ENCODE measurements at regions of chr4 and their contacts with region 1.

Region 1: DNA sequence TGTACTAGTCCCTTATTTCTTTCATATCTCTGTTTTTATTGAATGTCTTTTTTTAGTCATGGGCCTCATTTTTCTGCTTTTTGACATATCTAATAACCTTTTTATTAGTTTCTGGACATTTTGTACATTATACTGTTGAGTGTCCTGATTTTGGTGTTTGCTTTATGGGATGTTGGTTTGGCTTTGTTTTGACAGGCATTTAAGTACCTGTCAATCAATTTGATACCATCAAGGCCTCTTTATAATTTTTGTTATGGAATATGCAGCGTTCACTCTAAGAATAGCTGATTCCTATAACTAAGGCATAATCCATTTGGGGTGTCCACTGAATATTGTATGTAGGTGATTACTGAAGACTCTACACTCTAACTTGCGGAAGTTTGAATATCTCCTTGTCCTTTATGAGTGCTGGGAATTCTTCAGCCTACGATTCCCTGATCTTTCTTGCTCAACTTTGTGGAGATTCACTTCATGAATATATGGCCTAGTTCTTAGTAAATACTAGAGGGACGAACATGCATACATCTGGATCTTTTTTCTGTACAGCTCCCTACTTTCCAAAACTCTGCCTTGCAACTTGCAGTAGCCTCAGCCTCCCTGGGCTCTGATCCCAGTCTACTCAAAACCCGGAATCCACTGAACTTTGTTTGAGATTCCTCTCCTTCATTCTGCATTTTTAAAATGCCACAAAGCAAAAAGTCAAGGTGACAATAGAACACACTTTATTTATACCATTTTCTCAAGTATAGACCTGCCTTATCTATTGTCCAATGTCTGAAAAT is 50.2 kb upstream of the PCDH7 start:
- DNase-seq: no peak
- ATAC-seq: no peak
- H3K4me3 ChIP-seq: no peak overlapping the region
- H3K27ac ChIP-seq: no peak overlapping the region
- H3K4me1 ChIP-seq: no peaks in the 10 kb centered on the region
- H3K27me3 ChIP-seq: no peaks in the 10 kb centered on the region
- CTCF ChIP-seq: no peak
- POLR2A ChIP-seq: no peak
- RAD21 ChIP-seq: no peak

Region 2: GRCh38 chr4:29853833-29854232 is 816.2 kb before region 1 on chr4:
- CTCF ChIA-PET with region 1: no interaction called
- POLR2A ChIA-PET with region 1: no interaction called
- RAD21 ChIA-PET with region 1: no interaction called
- intact Hi-C with region 1: loop called (anchors 5 kb)
- DNase-seq: no peak
- ATAC-seq: no peak
- H3K4me3 ChIP-seq: no peak overlapping the region
- H3K27ac ChIP-seq: no peak overlapping the region
- H3K4me1 ChIP-seq: no peaks in the 10 kb centered on the region
- H3K27me3 ChIP-seq: no peaks in the 10 kb centered on the region
- CTCF ChIP-seq: no peak
- POLR2A ChIP-seq: no peak
- RAD21 ChIP-seq: no peak

Region 3: DNA sequence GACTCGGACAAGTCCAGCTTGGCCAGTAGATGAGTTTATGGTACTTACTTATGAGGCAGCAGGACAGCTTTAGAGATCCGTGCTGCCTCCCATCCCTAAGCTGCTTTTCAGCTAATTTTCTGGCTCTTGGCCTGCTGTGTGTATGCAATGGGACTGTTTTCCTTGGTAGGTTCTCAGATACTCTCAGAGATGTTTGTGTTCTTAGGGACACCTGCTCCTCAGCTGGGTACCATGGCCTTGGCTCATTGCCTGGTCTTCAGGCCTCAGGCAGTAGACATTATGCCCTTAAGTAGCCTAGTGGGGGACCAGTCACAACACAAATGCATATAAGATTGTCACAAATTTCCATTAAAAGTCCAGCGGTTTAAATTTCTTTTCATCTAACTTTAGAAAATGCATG is 738.1 kb after region 1 on chr4:
- CTCF ChIA-PET with region 1: no interaction called
- POLR2A ChIA-PET with region 1: no interaction called
- RAD21 ChIA-PET with region 1: no interaction called
- intact Hi-C with region 1: no loop called
- DNase-seq: no peak
- ATAC-seq: no peak
- H3K4me3 ChIP-seq: no peak overlapping the region
- H3K27ac ChIP-seq: no peak overlapping the region
- H3K4me1 ChIP-seq: no peaks in the 10 kb centered on the region
- H3K27me3 ChIP-seq: no peaks in the 10 kb centered on the region
- CTCF ChIP-seq: no peak
- POLR2A ChIP-seq: no peak
- RAD21 ChIP-seq: no peak

Region 4: DNA sequence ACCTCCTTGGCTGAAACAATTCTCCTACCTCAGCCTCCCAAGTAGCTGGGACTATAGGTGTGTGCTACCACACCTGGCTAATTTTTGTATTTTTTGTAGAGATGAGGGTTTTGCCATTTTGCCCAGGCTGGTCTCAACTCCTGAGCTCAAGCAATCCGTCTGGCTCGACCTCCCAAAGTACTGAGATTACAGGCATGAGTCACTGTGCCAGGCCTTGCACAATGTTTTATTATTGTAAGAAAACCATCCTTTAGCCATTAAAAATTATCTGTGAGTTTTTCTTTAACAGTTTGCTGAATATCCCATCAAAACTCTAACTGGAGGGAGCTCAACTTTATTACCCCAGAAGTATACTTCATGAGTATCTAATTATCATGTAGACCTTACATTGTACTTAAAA is 950.5 kb after region 1 on chr4:
- CTCF ChIA-PET with region 1: no interaction called
- POLR2A ChIA-PET with region 1: no interaction called
- RAD21 ChIA-PET with region 1: no interaction called
- intact Hi-C with region 1: no loop called
- DNase-seq: no peak
- ATAC-seq: no peak
- H3K4me3 ChIP-seq: no peak overlapping the region
- H3K27ac ChIP-seq: no peak overlapping the region
- H3K4me1 ChIP-seq: peaks cover 0 to 3% of the 10 kb centered on the region in 2 experiments; a peak in 1 of 4 replicates
- H3K27me3 ChIP-seq: no peaks in the 10 kb centered on the region
- CTCF ChIP-seq: no peak
- POLR2A ChIP-seq: no peak
- RAD21 ChIP-seq: no peak